Activated CD4-positive, alpha-beta memory T cell treated with anti-CD3 and anti-CD28 coated beads, Interleukin-2, amount 10 ng/mL, durations not matched to agents 7 days and 5 days (primary cell): ENCODE measurements at regions of chr1 and their contacts with region 1.

Region 1: GRCh38 chr1:222171005-222171404 is 376.9 kb downstream of the HHIPL2 start:
- DNase-seq: no peak
- H3K4me3 Mint-ChIP-seq: no peak overlapping the region
- H3K27ac Mint-ChIP-seq: no peak overlapping the region
- H3K4me1 Mint-ChIP-seq: no peaks in the 10 kb centered on the region
- H3K27me3 Mint-ChIP-seq: no peaks in the 10 kb centered on the region

Region 2: GRCh38 chr1:221478050-221478949 is 692.7 kb before region 1 on chr1:
- CTCF ChIA-PET with region 1: interaction called, 11 read pairs
- POLR2A ChIA-PET with region 1: no interaction called
- DNase-seq: peak; percentile 58
- H3K4me3 Mint-ChIP-seq: no peak overlapping the region
- H3K27ac Mint-ChIP-seq: no peak overlapping the region
- H3K4me1 Mint-ChIP-seq: peaks cover 2% of the 10 kb centered on the region
- H3K27me3 Mint-ChIP-seq: peaks cover 7% of the 10 kb centered on the region

Region 3: DNA sequence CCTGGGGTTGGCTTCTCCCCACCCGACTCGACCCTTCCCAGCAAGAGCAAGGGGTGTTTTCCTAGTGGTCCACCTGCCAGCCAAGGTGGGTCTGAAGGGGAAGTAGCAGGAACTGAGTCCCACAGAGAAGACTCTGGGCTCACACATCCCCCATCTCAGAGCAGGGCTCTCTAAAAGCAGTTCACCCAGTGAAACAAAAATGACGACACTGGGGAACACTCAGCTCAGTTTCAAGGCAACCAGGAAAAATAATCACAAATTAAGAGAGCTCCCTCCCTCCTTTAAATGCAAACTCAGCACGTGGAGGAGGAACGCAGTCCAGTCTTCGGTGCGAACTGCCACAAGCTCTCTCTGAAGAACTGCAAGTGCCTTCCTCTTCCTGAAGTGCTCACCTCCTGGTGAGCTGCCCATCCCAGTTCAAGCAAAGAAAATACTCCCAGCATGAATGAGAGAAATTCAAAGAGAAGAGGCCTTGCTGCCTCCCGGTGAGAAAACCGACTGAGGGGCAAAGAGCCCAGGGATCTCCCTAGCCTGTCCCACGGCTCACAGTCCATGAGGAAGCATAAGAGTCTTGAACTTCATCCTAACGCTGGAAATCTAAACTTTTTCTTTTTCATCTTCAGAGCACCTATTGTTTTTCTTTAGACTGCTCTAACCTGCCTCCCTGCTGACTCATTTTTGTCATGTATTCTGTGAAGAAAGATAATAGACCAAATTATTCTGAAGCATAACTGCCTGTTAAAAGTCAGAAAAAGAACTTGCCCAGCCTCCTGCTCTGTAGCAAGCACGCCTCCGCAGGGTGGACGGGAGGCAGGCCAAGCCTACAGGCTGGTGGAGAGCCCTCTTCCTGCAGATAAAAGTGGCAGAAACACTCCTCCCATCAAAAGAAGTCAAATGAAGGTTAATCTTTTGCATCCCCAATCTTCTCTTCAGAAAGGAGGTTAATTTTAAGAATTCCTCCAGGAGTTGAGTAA is 95.5 kb after region 1 on chr1:
- CTCF ChIA-PET with region 1: no interaction called
- POLR2A ChIA-PET with region 1: no interaction called
- DNase-seq: no peak
- H3K4me3 Mint-ChIP-seq: no peak overlapping the region
- H3K27ac Mint-ChIP-seq: no peak overlapping the region
- H3K4me1 Mint-ChIP-seq: no peaks in the 10 kb centered on the region
- H3K27me3 Mint-ChIP-seq: no peaks in the 10 kb centered on the region